ENCODE measurements at regions of chr6 and their contacts with region 1.

Region 1: GRCh38 chr6:159008656-159009288 is 8.8 kb upstream of the RSPH3 start:
- DNase-seq: no peak
- H3K4me3 ChIP-seq: no peak overlapping the region
- H3K27ac ChIP-seq: no peak overlapping the region
- H3K4me1 ChIP-seq: no peaks in the 10 kb centered on the region; the same call in 1 of the 2 replicates
- H3K27me3 ChIP-seq: no peaks in the 10 kb centered on the region
- CTCF ChIP-seq: peak; percentile 68

Region 2: GRCh38 chr6:159104163-159104925 is 95.6 kb after region 1 on chr6:
- CTCF ChIA-PET with region 1: no interaction called
- POLR2A ChIA-PET with region 1: no interaction called
- intact Hi-C with region 1: loop called (anchors 2 kb)
- DNase-seq: peak in 1 of 2 experiments; percentile 56
- H3K4me3 ChIP-seq: no peak overlapping the region
- H3K27ac ChIP-seq: no peak overlapping the region
- H3K4me1 ChIP-seq: no peaks in the 10 kb centered on the region
- H3K27me3 ChIP-seq: no peaks in the 10 kb centered on the region
- CTCF ChIP-seq: peak; percentile 86

Region 3: GRCh38 chr6:159134701-159135364 is 126.1 kb after region 1 on chr6:
- CTCF ChIA-PET with region 1: interaction called, 5 read pairs
- POLR2A ChIA-PET with region 1: no interaction called
- intact Hi-C with region 1: loop called (anchors 2 kb)
- DNase-seq: peak; percentile 49 to 54
- H3K4me3 ChIP-seq: no peak overlapping the region
- H3K27ac ChIP-seq: no peak overlapping the region
- H3K4me1 ChIP-seq: no peaks in the 10 kb centered on the region
- H3K27me3 ChIP-seq: peaks cover 9% of the 10 kb centered on the region
- CTCF ChIP-seq: peak; percentile 94